ENCODE measurements at regions of chr17 and their contacts with region 1.

Region 1: DNA sequence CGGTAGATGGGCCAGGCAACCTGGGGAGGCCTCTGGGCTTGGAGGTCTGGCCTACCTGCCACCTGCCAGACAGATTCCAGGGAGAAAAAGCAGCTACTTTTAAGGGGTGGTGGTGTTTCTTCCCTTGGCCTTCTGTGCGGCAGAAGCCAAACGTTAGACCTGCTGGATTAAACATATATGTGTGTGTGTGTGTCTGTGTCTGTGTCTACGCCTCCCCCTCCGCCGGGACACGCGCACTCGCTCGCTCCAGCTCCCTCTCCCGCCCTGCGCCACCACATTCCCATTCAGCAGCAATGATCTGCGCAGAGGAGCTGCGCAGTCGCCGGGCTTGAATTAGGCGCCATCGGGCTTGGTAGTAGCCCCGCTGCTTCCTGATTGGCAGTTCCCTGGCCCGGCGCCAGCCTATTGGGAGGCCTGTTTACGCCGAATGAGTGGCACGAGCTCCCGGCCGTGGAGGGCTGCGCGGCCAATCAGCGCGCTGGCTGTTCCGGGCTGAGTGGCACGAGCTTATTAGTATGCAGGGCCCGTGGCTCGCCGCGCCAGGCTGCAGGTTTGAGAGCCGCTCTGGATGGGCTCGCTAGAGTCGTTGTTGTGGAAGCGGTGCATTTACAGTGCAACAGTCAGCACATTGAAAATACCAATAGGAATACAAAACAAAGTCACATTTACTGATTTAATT is at the start of gene BAHCC1:
- DNase-seq: peak; percentile 100
- ATAC-seq: peak; percentile 73 to 92 (median 88)
- H3K4me3 ChIP-seq: peak within 1 kb of the TSS; percentile 63 to 94 (median 78)
- H3K27ac ChIP-seq: peak within 1 kb of the TSS; percentile 92 to 99 (median 96)
- H3K4me1 ChIP-seq: peaks cover 12 to 72% (median 34%) of the 10 kb centered on the region in 9 donors
- H3K27me3 ChIP-seq: peaks cover 0 to 66% (median 0%) of the 10 kb centered on the region in 7 donors
- CTCF ChIP-seq: no peak
- total RNA-seq, gene BAHCC1: 6.3 to 11.1 (median 9.2) TPM

Region 2: GRCh38 chr17:81253358-81254131 is 141.5 kb before region 1 on chr17:
- intact Hi-C with region 1: loop called in 1 of 10 experiments (anchors 10 kb)
- DNase-seq: peak in 1 of 2 donors; percentile 54
- ATAC-seq: peak in 5 of 8 donors; percentile 35 to 55 (median 46)
- H3K4me3 ChIP-seq: no peak overlapping the region
- H3K27ac ChIP-seq: no peak overlapping the region
- H3K4me1 ChIP-seq: peaks cover 4 to 24% (median 13%) of the 10 kb centered on the region in 9 donors
- H3K27me3 ChIP-seq: no peaks in the 10 kb centered on the region
- CTCF ChIP-seq: peak; percentile 67 to 86 (median 79)

Region 3: DNA sequence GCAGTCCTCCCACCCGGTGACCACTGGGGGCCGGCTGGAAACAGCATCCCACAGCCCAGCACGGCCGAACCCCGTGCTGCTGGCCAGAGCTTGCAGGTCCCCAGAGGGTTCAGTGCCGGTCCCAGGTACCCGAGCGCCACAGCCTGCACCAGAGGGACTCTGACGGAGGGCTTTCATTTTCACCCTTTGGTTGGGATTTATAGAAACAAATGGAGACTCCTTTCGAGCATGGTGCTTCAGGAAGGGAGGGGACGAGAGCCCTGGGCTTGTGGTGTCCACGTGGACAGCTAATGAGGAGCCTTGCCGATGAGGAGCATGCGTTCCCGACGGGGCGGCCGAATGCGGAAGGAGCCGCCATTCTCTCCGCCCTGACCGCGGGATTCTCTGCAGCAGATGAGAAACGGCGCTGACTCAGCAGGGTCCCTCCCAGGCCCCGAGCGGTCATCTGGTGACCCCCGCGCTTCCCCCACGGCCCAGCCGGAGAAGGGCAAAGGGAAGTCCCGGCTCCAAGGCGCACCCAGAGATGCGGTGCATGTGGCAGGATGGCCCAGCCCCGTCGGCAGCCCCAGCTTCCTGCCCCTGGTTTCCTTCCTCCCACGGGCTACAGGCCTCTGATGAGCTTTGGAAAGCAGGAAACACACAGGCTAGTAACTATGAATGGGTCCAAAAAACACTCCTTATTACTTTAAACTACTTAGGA is 109.7 kb before region 1 on chr17:
- intact Hi-C with region 1: loop called in 5 of 10 experiments (anchors 5 kb)
- DNase-seq: peak; percentile 81 to 82
- ATAC-seq: peak; percentile 86 to 93 (median 88)
- H3K4me3 ChIP-seq: peak overlapping the region in 9 of 10 donors; percentile 31 to 54 (median 47)
- H3K27ac ChIP-seq: peak overlapping the region; percentile 78 to 93 (median 92)
- H3K4me1 ChIP-seq: peaks cover 15 to 51% (median 38%) of the 10 kb centered on the region in 9 donors
- H3K27me3 ChIP-seq: no peaks in the 10 kb centered on the region
- CTCF ChIP-seq: no peak

Region 4: GRCh38 chr17:81309070-81309905 is 85.8 kb before region 1 on chr17:
- intact Hi-C with region 1: loop called in 1 of 10 experiments (anchors 5 kb)
- DNase-seq: peak; percentile 92 to 93
- ATAC-seq: peak; percentile 87 to 96 (median 94)
- H3K4me3 ChIP-seq: peak overlapping the region in 9 of 10 donors; percentile 31 to 56 (median 51)
- H3K27ac ChIP-seq: peak overlapping the region; percentile 60 to 90 (median 82)
- H3K4me1 ChIP-seq: peaks cover 12 to 33% (median 21%) of the 10 kb centered on the region in 9 donors
- H3K27me3 ChIP-seq: no peaks in the 10 kb centered on the region
- CTCF ChIP-seq: peak in 8 of 9 donors; percentile 27 to 68 (median 54)

Region 5: DNA sequence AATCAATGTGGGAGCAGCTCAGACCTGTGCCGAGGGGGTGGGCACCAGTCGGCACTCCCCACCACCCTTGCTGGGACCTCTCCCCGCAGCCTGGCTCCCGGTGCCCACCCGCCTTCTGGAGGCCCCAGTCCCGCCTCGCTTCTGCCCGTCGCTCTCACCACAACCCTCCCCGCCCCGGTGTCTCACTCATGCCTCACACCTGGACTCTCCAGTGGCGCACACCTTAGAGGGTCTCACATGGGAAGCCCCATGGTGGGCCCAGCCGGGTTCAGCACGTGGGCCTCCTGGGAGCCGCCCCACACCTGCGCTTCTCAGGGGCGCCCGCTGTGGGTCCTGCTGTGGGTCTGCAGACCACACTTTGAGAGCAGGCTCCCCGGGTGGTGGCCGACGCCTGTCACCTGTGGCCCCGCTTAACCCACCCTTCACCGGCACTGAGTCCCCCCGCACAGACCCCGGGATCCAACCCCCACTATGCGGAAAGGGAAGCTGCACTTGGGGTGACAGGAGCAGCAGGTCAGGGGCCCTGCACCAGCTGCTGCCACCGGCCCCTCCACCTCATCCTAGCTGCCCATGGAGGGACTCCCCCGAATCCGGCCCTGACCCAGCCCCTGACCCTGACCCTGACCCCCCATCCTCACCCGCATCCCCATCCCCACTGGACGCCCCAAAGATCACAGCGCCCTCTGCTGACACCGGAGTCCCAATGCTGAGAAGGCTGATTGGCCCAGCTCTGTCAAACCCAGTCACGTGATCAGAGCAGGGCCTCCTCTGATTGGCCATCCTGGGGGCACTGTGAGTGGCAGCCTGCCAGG is 72.6 kb before region 1 on chr17:
- intact Hi-C with region 1: no loop called
- DNase-seq: no peak
- ATAC-seq: peak in 1 of 8 donors; percentile 17
- H3K4me3 ChIP-seq: no peak overlapping the region
- H3K27ac ChIP-seq: no peak overlapping the region
- H3K4me1 ChIP-seq: peaks cover 0 to 23% (median 0%) of the 10 kb centered on the region in 9 donors
- H3K27me3 ChIP-seq: no peaks in the 10 kb centered on the region
- CTCF ChIP-seq: peak in 6 of 9 donors; percentile 15 to 34 (median 26)

Region 6: GRCh38 chr17:81484195-81484979 is 89.3 kb after region 1 on chr17:
- intact Hi-C with region 1: loop called in 9 of 10 experiments (anchors 2 to 10 kb)
- DNase-seq: peak; percentile 88 to 90
- ATAC-seq: peak; percentile 48 to 76 (median 64)
- H3K4me3 ChIP-seq: peak overlapping the region in 9 of 10 donors; percentile 33 to 59 (median 54)
- H3K27ac ChIP-seq: peak overlapping the region in 5 of 10 donors; percentile 38 to 59 (median 52)
- H3K4me1 ChIP-seq: peaks cover 23 to 78% (median 61%) of the 10 kb centered on the region in 9 donors
- H3K27me3 ChIP-seq: peaks cover 0 to 40% (median 0%) of the 10 kb centered on the region in 7 donors
- CTCF ChIP-seq: peak in 8 of 9 donors; percentile 95 to 100 (median 99)

Region 7: DNA sequence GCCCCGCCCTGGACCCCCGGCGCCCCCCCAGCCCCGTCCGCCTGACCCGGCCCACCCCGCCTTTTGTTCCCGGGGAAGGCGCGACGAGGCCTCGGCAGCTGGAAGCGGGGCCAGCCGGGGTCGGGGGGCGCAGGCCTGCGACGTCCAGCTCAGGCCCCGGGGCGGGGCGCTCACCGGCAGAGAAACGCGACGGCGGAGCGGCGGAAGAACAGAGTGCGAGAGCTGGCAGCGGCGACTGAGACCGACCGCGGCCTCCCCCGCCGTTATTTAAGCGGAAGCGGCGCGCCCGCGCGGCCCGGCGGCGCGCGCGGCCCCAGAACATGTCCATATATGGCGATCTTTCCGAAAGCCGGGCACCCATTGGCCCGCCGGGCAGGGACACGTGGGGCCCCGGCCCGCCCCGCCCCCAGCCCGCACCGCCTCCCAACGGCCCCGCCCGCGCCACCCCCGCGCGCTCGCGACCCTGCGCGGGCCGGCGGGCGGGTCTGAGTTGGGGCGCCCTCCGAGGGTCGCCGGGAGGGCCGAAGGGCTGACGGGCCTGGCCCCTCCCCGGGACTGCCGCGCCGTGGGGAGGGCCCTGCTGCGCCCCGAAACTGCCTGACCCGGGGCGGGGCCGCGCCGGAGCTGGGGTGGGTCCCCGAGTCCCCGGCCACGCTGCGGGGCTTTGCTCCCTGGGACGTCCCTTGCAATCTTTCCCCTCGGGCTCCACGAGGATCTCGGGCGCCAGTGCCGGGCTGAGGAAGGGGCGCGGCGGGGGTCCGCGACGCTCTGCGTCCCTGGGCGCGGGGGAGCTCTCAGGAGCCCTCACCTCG is 117.7 kb after region 1 on chr17 and contains the start of gene ACTG1:
- intact Hi-C with region 1: loop called in 1 of 10 experiments (anchors 2 kb)
- DNase-seq: peak; percentile 93
- ATAC-seq: peak; percentile 52 to 80 (median 69)
- H3K4me3 ChIP-seq: peak within 1 kb of the TSS; percentile 73 to 99 (median 94)
- H3K27ac ChIP-seq: peak within 1 kb of the TSS; percentile 98 to 100 (median 100)
- H3K4me1 ChIP-seq: peaks cover 14 to 66% (median 49%) of the 10 kb centered on the region in 9 donors
- H3K27me3 ChIP-seq: no peaks in the 10 kb centered on the region
- CTCF ChIP-seq: no peak
- total RNA-seq, gene ACTG1: 298 to 959 (median 345) TPM

Measured in heart right ventricle (tissue), 16 donors.